Sciatic nerve (tissue), 2 donors: ENCODE measurements at regions of chr14 and their contacts with region 1.

Region 1: DNA sequence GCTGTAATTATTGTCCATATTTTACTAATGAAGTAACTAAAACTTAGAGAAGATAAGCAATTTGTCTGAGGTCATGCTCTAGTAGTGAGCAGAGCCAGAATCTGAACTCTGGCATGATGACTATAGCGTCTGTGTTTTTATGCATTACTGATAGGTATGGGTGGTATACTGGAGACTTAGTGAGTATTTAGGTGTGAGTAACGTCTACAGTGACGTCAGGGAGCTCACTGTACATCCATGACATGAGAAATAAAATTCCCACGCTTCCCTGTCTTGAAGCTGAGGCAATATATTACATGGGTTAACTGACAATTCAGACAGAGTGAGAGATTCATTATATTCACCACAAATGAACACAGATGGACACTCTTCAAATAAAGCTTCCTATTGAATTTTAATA is 721.1 kb downstream of the NRXN3 start:
- DNase-seq: no peak
- ATAC-seq: no peak

Region 2: GRCh38 chr14:77950371-77951063 is 940.7 kb before region 1 on chr14:
- intact Hi-C with region 1: no loop called
- DNase-seq: no peak
- ATAC-seq: no peak

Region 3: DNA sequence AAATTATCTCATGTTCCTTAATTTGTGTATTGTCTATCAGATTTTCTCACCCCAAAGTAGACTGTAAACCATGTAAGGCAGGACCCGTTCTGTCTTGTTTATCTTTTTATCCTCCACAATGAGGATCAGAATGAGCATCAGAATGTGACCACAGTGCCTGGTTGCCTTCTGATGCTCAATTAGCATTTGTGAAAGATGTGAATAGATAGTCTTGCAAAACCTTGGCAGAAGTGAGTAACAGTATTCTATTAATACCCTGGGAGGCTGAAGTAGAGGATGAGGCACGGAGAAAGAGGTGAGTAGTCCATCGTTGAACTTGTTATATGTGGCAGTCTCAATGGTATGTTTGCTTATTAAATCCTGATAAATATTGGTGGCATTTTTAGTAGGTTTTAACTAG is 60.3 kb after region 1 on chr14:
- intact Hi-C with region 1: loop called (anchors 2 kb)
- DNase-seq: no peak
- ATAC-seq: no peak

Region 4: DNA sequence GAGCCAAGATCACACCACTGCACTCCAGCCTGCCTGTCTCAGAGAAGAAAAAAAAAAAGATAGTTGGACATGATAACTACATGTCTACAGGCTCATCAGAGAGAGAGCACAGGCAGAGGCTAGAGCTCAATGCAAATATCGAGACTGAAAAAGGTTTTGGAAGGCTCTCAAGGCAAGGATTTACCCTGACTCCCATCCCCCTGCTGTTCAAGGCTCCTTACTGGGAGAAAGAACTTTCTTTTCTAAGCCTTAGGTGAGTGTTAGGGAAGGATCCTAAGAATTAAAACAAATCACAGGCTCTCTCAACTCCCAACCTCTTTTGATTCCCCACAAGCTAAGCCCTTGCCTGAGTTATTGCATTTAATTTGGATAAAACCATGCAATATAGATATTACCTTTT is 794.9 kb after region 1 on chr14:
- intact Hi-C with region 1: no loop called
- DNase-seq: no peak
- ATAC-seq: no peak